Endothelial cell of umbilical vein (primary cell): ENCODE measurements at regions of chr15 and their contacts with region 1.

Region 1: DNA sequence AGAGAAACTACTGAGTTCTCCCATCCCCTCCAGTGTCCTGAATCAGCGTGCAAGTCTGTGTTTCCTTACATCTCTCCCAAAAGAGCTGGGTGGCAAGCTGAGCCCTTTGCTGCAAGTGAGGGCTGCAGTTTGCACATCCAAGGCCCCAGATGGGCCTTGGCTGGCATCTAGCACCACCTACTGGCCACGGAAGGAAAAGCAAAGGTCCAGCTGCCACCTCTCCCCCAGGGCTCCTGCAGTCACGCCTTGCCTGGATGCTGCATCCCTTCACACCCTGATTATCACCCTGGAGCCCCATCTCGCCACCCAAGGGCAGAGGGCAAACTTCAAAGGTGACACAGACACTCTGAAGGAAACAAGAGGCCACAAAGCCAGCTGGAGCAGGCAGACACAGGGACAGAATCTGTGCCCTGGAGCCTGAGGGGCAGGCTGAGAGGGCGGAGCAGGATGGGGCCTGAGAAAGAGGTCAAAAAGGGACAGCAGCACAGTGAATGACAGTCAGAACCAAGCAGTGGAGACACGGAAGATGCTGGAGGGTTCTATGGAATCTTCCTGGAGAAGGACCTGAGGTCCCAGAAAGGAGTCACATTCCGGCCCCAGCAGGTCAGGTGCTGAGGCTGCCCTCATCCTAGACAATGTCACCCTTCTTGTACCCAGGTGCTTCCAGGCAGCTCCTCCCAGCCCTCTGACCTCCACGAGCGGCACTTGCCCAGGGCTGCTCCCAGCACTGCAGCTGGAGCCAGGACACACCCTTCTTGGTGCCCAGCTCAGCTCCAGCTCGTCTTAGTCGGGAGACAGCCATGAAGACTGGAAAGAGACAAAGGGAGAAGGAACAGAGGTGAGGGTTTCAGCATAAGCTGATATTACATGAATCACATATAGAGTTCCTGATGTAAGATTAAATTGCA is 18.3 kb upstream of the NTRK3 start:
- DNase-seq: peak; percentile 46
- H3K4me3 ChIP-seq: no peak overlapping the region
- H3K27ac ChIP-seq: no peak overlapping the region
- H3K4me1 ChIP-seq: no peaks in the 10 kb centered on the region
- H3K27me3 ChIP-seq: no peaks in the 10 kb centered on the region
- CTCF ChIP-seq: peak; percentile 77 to 92
- POLR2A ChIP-seq: no peak

Region 2: GRCh38 chr15:88187153-88187552 is 87.7 kb before region 1 on chr15:
- CTCF ChIA-PET with region 1: no interaction called
- POLR2A ChIA-PET with region 1: no interaction called
- dilution Hi-C with region 1: no loop called
- intact Hi-C with region 1: no loop called
- DNase-seq: no peak
- H3K4me3 ChIP-seq: no peak overlapping the region
- H3K27ac ChIP-seq: no peak overlapping the region
- H3K4me1 ChIP-seq: peaks cover 4% of the 10 kb centered on the region
- H3K27me3 ChIP-seq: no peaks in the 10 kb centered on the region
- CTCF ChIP-seq: no peak
- POLR2A ChIP-seq: no peak

Region 3: GRCh38 chr15:88258093-88258641 is 16.6 kb before region 1 on chr15:
- CTCF ChIA-PET with region 1: interaction called, 21 read pairs
- POLR2A ChIA-PET with region 1: no interaction called
- dilution Hi-C with region 1: no loop called
- intact Hi-C with region 1: no loop called
- DNase-seq: no peak
- H3K4me3 ChIP-seq: no peak overlapping the region
- H3K27ac ChIP-seq: no peak overlapping the region
- H3K4me1 ChIP-seq: no peaks in the 10 kb centered on the region
- H3K27me3 ChIP-seq: peaks cover 38 to 43% of the 10 kb centered on the region in 2 experiments
- CTCF ChIP-seq: peak in 1 of 2 donors; percentile 8
- POLR2A ChIP-seq: no peak

Region 4: DNA sequence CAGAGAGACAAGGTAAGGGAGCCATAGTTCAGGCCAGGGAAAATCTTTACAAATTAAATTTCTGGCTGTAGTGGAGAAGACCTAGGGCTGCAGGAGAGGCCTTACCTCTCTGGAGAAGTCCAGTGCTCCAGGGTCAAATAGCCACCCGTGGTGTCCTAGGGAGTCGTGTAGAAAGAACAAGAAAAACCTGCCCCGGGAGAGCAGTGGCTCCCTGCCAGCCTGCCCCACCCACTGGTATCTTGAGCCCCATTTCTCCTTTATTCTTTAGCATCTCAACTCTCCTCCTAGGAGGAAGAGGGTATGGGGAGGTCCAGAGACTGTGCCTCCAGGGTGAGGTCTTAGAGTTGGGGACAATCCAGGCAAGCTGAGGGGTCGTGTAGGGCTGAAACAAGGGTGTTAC is 13.9 kb after region 1 on chr15:
- CTCF ChIA-PET with region 1: no interaction called
- POLR2A ChIA-PET with region 1: no interaction called
- dilution Hi-C with region 1: no loop called
- intact Hi-C with region 1: no loop called
- DNase-seq: no peak
- H3K4me3 ChIP-seq: no peak overlapping the region
- H3K27ac ChIP-seq: no peak overlapping the region
- H3K4me1 ChIP-seq: no peaks in the 10 kb centered on the region
- H3K27me3 ChIP-seq: no peaks in the 10 kb centered on the region
- CTCF ChIP-seq: no peak
- POLR2A ChIP-seq: no peak

Region 5: DNA sequence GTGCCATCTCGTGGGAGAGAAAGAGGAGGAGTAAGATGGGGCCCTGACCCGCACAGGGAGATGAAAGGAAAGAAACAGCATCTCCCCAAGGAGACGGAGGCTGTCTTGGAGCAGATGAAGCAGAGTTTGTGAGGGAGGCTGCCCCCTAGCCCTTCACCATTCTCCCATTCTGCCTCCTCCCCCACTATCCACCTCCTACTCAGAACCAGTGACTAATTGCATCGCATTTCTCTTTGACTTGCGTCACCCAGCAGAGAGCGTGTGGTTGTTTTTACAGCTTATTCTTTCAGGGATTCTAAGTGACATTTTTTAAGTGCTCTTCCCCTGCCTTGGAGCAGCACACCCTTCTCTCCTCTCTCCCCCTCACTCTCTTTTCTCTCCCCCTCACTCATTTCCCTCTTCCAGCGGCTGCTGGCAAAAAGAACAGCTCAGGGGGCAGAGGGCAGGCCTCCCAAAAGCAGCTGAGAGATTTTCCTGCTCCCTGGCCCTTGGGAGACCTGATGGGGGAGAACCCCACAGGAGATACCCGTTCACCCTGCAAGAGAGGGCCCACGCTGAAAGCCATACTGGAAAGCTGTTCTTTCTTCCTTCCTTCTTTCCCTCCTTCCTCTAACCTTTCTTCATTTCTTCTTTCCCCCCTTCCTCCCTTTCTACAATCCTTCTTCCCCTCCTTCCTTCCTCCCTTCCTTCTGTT is 100.6 kb after region 1 on chr15:
- CTCF ChIA-PET with region 1: no interaction called
- POLR2A ChIA-PET with region 1: no interaction called
- dilution Hi-C with region 1: no loop called
- intact Hi-C with region 1: no loop called
- DNase-seq: no peak
- H3K4me3 ChIP-seq: no peak overlapping the region
- H3K27ac ChIP-seq: no peak overlapping the region
- H3K4me1 ChIP-seq: no peaks in the 10 kb centered on the region
- H3K27me3 ChIP-seq: no peaks in the 10 kb centered on the region
- CTCF ChIP-seq: no peak
- POLR2A ChIP-seq: no peak

Region 6: DNA sequence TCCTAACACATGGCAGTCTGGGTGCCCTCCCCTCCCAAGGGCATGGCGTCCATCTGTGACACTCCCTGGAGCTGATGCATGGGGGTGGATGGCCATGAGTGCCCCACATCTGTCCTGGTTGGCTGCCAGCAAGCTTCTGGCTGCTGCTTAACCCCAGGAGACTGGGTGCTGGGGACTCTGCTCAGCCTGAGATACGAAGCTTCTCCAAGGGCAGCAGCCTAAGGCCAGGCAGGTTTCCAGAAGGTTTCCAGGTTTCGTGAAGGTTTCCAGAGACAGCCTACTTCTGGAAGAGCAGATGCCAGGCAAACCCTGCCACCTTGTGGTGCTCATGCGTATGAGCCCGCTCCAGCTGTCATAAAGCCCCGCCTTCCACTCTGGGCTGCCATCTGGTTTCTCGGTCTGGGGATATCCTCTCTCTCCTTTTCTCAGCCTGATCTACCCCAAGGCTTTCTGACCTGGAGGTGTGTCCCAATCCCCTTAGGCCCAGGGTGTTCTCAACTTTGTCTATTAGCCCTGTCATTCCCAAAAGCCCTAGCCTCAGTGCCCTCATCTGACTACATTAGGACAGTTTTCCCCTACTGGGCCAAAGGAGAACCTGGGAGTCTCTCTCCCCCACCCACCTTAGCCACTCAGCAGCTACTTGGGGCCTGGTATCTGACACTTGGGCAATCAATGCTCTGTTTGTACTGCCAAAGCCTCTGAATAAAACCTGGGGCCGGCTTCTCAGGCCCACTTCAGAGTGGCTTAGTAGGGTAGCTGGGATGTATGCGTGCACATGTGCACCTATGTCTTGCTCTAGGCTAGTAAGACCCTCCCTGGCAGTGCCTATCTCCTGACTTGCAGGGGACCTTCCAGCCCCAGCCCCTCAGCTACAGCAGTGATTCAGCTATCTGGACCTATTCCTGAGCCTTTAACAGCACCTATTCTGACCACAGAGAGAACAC is 180.3 kb after region 1 on chr15:
- CTCF ChIA-PET with region 1: interaction called, 10 read pairs
- POLR2A ChIA-PET with region 1: no interaction called
- dilution Hi-C with region 1: no loop called
- intact Hi-C with region 1: loop called (anchors 10 kb)
- DNase-seq: peak; percentile 60
- H3K4me3 ChIP-seq: no peak overlapping the region
- H3K27ac ChIP-seq: no peak overlapping the region
- H3K4me1 ChIP-seq: peaks cover 15% of the 10 kb centered on the region
- H3K27me3 ChIP-seq: no peaks in the 10 kb centered on the region
- CTCF ChIP-seq: peak; percentile 77 to 84
- POLR2A ChIP-seq: no peak